Calu3 (cell line): ENCODE measurements at regions of chr2 and their contacts with region 1.

Region 1: DNA sequence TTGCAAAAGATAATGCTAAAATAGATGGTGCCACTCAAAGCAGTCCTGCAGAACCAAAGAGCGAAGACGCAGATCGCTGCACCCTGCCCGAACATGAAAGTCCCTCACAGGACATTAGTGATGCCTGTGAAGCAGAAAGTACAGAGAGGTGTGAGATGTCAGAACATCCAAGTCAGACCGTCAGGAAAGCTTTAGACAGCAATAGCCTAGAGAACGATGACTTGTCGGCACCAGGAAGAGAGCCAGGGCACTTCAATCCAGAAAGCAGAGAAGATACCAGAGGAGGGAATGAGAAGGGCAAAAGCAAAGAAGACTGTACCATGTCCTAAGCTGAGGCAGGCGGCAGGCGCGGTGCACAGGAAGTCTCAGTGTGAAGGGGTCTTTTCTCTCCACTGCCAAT is 34.8 kb upstream of the RBM44 start:
- DNase-seq: no peak
- H3K4me3 Mint-ChIP-seq: no peak overlapping the region
- H3K27ac Mint-ChIP-seq: no peak overlapping the region
- H3K4me1 Mint-ChIP-seq: no peaks in the 10 kb centered on the region
- H3K27me3 Mint-ChIP-seq: no peaks in the 10 kb centered on the region
- CTCF ChIP-seq: no peak

Region 2: GRCh38 chr2:238644095-238645081 is 880.6 kb after region 1 on chr2:
- CTCF ChIA-PET with region 1: interaction called, 15 read pairs
- intact Hi-C with region 1: no loop called
- DNase-seq: peak; percentile 16
- H3K4me3 Mint-ChIP-seq: no peak overlapping the region
- H3K27ac Mint-ChIP-seq: peak overlapping the region; percentile 93
- H3K4me1 Mint-ChIP-seq: peaks cover 18% of the 10 kb centered on the region
- H3K27me3 Mint-ChIP-seq: peaks cover 2% of the 10 kb centered on the region
- CTCF ChIP-seq: no peak